CD14-positive monocyte (primary cell): ENCODE measurements at regions of chr12 and their contacts with region 1.

Region 1: GRCh38 chr12:126418400-126418799 is 1353.2 kb downstream of the AACS start:
- DNase-seq: no peak
- H3K4me3 ChIP-seq: no peak overlapping the region
- H3K4me3 Mint-ChIP-seq: no peak overlapping the region
- H3K27ac ChIP-seq: no peak overlapping the region
- H3K27ac Mint-ChIP-seq: no peak overlapping the region
- H3K4me1 ChIP-seq: no peaks in the 10 kb centered on the region
- H3K4me1 Mint-ChIP-seq: no peaks in the 10 kb centered on the region
- H3K27me3 ChIP-seq: no peaks in the 10 kb centered on the region
- H3K27me3 Mint-ChIP-seq: no peaks in the 10 kb centered on the region
- CTCF ChIP-seq: no peak

Region 2: GRCh38 chr12:126457776-126458175 is 39.4 kb after region 1 on chr12:
- intact Hi-C with region 1: loop called in 1 of 2 experiments (anchors 2 kb)
- DNase-seq: no peak
- H3K4me3 ChIP-seq: no peak overlapping the region
- H3K4me3 Mint-ChIP-seq: no peak overlapping the region
- H3K27ac ChIP-seq: no peak overlapping the region
- H3K27ac Mint-ChIP-seq: no peak overlapping the region
- H3K4me1 ChIP-seq: no peaks in the 10 kb centered on the region
- H3K4me1 Mint-ChIP-seq: no peaks in the 10 kb centered on the region
- H3K27me3 ChIP-seq: no peaks in the 10 kb centered on the region
- H3K27me3 Mint-ChIP-seq: peaks cover 0 to 2% (median 0%) of the 10 kb centered on the region in 3 donors
- CTCF ChIP-seq: no peak